ENCODE measurements at regions of chr4 and their contacts with region 1.

Region 1: DNA sequence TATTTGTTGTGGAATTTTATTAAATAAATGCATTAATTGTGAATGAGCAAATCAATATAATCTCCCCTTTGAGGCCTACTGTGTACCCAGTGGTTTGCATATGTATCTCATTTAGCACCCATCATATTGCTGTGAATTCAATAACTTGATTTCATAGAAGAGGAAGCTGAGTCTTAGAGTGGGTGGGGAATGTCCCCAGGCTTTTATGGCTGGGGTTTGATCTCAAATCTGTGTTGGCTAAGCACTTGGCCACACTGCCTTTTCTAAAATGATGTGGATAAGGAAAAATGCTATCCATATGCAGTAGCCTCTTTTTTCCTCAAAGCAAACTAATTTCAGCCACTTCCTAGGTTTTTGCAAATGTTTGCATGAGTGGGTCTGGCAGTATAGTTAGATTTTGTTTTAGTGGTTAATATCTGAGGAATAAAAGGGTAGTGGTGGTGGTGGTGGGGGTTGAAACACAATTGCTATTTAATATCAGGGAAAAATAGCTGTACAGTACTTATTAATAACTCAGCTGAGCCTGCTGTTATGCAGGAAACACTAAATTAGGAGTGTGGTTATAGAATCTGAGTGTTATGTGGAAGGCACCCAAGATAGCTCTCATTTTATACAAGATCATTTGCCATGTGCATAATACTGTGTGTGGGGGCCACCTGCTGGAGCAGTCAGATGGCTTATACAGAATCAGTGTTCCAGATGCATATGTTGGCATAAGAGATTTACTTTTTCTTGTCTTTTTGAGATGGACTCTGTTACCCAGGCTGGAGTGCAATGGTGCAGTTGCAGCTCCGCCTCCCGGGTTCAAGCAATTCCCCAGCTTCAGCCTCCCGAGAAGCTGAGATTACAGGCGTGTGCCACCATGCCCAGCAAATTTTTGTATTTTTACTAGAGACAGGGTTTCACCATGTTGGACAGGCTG is 108.0 kb downstream of the TMEM131L start:
- DNase-seq: peak; percentile 59 to 74 (median 64)
- H3K4me3 ChIP-seq: no peak overlapping the region
- H3K4me3 Mint-ChIP-seq: peak overlapping the region in 3 of 8 donors; percentile 40 to 64 (median 47)
- H3K27ac ChIP-seq: peak overlapping the region; percentile 1
- H3K27ac Mint-ChIP-seq: peak overlapping the region in 6 of 7 donors; percentile 16 to 86 (median 68)
- H3K4me1 ChIP-seq: peaks cover 31% of the 10 kb centered on the region
- H3K4me1 Mint-ChIP-seq: peaks cover 50 to 74% (median 59%) of the 10 kb centered on the region in 4 donors
- H3K27me3 ChIP-seq: no peaks in the 10 kb centered on the region
- H3K27me3 Mint-ChIP-seq: no peaks in the 10 kb centered on the region

Region 2: DNA sequence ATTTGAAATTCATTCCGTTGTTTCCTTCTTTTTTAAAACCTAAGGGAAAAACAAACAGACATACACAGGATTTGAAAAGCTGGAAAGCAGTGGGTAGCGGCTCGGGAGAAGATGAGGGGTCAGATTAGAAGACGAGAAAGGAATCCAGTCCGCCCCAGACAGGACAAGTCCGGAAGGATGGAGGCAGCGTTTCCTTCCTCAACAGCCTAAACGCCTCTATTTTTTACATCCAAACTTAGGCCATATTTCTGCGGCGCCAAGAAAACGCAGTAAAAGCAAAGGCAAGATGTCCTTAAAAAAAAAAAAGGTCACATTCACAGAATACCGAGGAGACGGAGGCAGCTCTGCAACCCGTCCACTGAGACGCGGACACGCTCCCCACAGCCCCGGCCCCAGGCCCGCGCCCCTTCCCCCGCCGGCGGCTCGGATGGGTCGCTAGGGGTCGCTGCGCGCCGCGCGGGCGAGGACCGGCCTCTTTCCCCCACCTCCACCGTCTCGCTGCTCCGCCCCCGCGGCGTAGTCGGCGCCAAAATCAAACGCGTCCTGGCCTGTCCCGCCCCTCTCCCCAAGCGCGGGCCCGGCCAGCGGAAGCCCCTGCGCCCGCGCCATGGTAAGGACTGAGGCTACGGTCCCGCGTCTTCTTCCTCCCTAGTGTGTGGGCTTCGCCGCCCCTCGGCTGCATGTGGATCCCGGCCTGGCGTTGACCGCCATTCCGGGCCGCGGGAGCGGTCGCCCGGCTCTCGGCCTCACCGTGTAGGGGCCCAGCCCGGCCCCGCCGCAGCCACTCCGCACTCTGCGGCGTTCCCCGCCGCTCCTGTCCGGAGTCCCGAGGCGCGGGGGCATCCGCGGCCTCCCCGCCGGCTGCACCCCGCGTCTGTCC is 229.8 kb before region 1 on chr4 and contains the start of gene MND1:
- CTCF ChIA-PET with region 1: interaction called, 86 read pairs
- POLR2A ChIA-PET with region 1: interaction called, 7 read pairs
- intact Hi-C with region 1: loop called (anchors 1 kb)
- DNase-seq: peak; percentile 87 to 89 (median 88)
- H3K4me3 ChIP-seq: peak within 1 kb of the TSS; percentile 86
- H3K4me3 Mint-ChIP-seq: peak within 1 kb of the TSS; percentile 90 to 98 (median 93)
- H3K27ac ChIP-seq: peak within 1 kb of the TSS; percentile 54
- H3K27ac Mint-ChIP-seq: peak within 1 kb of the TSS in 6 of 7 donors; percentile 7 to 86 (median 73)
- H3K4me1 ChIP-seq: peaks cover 11% of the 10 kb centered on the region
- H3K4me1 Mint-ChIP-seq: peaks cover 7 to 25% (median 18%) of the 10 kb centered on the region in 4 donors
- H3K27me3 ChIP-seq: no peaks in the 10 kb centered on the region
- H3K27me3 Mint-ChIP-seq: no peaks in the 10 kb centered on the region
- total RNA-seq, gene MND1: not detected

Region 3: DNA sequence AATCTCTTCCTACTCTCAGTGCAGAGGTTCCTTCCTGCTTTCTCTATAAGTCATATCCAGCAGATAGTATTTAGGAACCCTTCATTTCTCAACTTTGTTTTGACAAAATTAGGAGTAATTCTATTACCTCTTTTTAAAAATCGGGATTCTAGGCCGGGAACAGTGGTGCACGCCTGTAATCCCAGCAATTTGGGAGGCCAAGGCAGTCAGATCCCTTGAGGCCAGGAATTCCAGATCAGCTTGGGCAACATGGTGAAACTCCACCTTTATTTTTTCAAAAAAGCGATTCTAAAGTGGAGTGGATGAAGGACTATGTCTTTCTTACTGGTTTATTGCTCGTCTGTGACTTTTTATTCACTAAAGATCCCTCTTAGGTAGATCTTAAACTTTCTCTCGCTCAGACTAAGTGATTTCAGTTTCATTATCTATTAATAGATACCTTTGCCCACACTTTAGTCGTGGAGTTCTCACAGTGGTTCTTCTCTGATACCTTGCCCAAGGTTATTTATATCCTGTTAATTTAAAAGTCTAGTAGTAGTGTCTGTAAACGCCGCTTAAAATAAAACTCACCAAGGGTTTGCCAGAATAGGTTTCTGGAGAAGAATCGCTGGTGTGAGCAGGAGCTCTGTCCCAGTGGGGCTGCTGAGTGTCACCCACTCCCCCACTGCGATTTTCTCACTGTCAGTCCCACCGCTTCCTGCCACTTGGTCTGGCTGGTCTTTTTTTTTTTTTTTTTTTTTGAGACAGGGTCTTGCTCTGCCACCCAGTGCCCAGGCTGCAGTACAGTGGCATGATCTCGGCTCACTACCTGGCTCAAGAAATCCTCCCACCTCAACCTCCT is 135.0 kb before region 1 on chr4:
- CTCF ChIA-PET with region 1: interaction called, 228 read pairs
- POLR2A ChIA-PET with region 1: interaction called, 32 read pairs
- intact Hi-C with region 1: no loop called
- DNase-seq: peak; percentile 45 to 60 (median 55)
- H3K4me3 ChIP-seq: peak overlapping the region; percentile 55 to 60
- H3K4me3 Mint-ChIP-seq: peak overlapping the region; percentile 76 to 95 (median 88)
- H3K27ac ChIP-seq: peak overlapping the region; percentile 72
- H3K27ac Mint-ChIP-seq: peak overlapping the region; percentile 73 to 97 (median 94)
- H3K4me1 ChIP-seq: peaks cover 36% of the 10 kb centered on the region
- H3K4me1 Mint-ChIP-seq: peaks cover 18 to 45% (median 31%) of the 10 kb centered on the region in 4 donors
- H3K27me3 ChIP-seq: no peaks in the 10 kb centered on the region
- H3K27me3 Mint-ChIP-seq: no peaks in the 10 kb centered on the region

Region 4: GRCh38 chr4:153488006-153488891 is 85.9 kb before region 1 on chr4:
- CTCF ChIA-PET with region 1: interaction called, 14 read pairs
- POLR2A ChIA-PET with region 1: interaction called, 5 read pairs
- intact Hi-C with region 1: no loop called
- DNase-seq: peak; percentile 81 to 94 (median 82)
- H3K4me3 ChIP-seq: peak overlapping the region; percentile 25 to 54
- H3K4me3 Mint-ChIP-seq: peak overlapping the region; percentile 78 to 92 (median 88)
- H3K27ac ChIP-seq: peak overlapping the region; percentile 88
- H3K27ac Mint-ChIP-seq: peak overlapping the region; percentile 94 to 99 (median 96)
- H3K4me1 ChIP-seq: peaks cover 90% of the 10 kb centered on the region
- H3K4me1 Mint-ChIP-seq: peaks cover 64 to 87% (median 73%) of the 10 kb centered on the region in 4 donors
- H3K27me3 ChIP-seq: no peaks in the 10 kb centered on the region
- H3K27me3 Mint-ChIP-seq: peaks cover 0 to 2% of the 10 kb centered on the region in 2 donors

Region 5: DNA sequence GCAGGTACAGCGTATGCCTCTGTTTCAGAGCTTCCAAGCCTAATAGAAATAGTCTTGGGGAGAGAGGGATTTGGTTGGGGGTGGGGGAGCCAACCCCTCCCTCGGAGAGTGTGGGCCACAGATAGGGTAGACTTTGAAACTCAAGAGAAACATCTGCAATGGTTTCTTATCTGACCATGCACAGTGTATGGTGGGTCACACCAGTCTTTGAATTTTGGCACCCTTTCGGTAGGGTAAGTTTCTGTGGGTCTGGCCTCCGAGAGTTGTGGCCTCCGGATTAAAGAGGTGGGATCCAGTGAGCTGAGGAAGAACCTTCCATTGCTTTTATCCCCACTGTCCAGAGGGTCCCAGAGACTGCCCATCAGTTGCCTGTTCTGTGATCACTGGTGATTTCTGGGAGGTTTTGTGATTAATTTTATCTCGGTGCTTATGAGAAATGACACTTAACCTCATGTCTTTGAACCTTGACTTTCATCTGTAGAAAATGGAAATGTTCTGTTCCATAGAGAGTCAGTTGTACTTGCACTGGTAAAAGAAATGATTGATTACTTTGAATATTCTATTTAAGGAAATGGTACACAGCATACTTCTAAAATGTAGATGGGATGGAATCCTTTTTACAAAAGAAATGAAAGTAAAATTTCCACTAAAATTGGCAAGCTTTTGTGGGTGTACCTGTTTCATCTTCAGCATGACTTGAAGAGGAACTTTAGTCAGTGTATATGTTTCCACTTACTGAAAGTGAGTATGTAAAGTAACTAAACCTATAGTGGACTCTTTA is 45.2 kb before region 1 on chr4:
- CTCF ChIA-PET with region 1: interaction called, 17 read pairs
- POLR2A ChIA-PET with region 1: interaction called, 4 read pairs
- intact Hi-C with region 1: no loop called
- DNase-seq: no peak
- H3K4me3 ChIP-seq: peak overlapping the region; percentile 23 to 37
- H3K4me3 Mint-ChIP-seq: peak overlapping the region; percentile 11 to 87 (median 80)
- H3K27ac ChIP-seq: peak overlapping the region; percentile 54
- H3K27ac Mint-ChIP-seq: peak overlapping the region; percentile 75 to 94 (median 90)
- H3K4me1 ChIP-seq: peaks cover 98% of the 10 kb centered on the region
- H3K4me1 Mint-ChIP-seq: peaks cover 70 to 93% (median 85%) of the 10 kb centered on the region in 4 donors
- H3K27me3 ChIP-seq: no peaks in the 10 kb centered on the region
- H3K27me3 Mint-ChIP-seq: no peaks in the 10 kb centered on the region

Region 6: GRCh38 chr4:153555730-153556433 is 18.3 kb before region 1 on chr4:
- CTCF ChIA-PET with region 1: interaction called, 13 read pairs
- POLR2A ChIA-PET with region 1: no interaction called
- intact Hi-C with region 1: no loop called
- DNase-seq: no peak
- H3K4me3 ChIP-seq: no peak overlapping the region
- H3K4me3 Mint-ChIP-seq: no peak overlapping the region
- H3K27ac ChIP-seq: no peak overlapping the region
- H3K27ac Mint-ChIP-seq: peak overlapping the region in 4 of 7 donors; percentile 24 to 87 (median 52)
- H3K4me1 ChIP-seq: no peaks in the 10 kb centered on the region
- H3K4me1 Mint-ChIP-seq: peaks cover 29 to 43% (median 37%) of the 10 kb centered on the region in 4 donors
- H3K27me3 ChIP-seq: no peaks in the 10 kb centered on the region
- H3K27me3 Mint-ChIP-seq: no peaks in the 10 kb centered on the region